ENCODE measurements at regions of chr4 and their contacts with region 1.

Region 1: GRCh38 chr4:89379511-89380044 is 72.0 kb upstream of the GPRIN3 start:
- DNase-seq: no peak
- ATAC-seq: no peak
- H3K4me3 ChIP-seq: no peak overlapping the region
- H3K4me3 Mint-ChIP-seq: no peak overlapping the region
- H3K27ac ChIP-seq: no peak overlapping the region
- H3K27ac Mint-ChIP-seq: no peak overlapping the region
- H3K4me1 ChIP-seq: no peaks in the 10 kb centered on the region
- H3K4me1 Mint-ChIP-seq: no peaks in the 10 kb centered on the region
- H3K27me3 ChIP-seq: no peaks in the 10 kb centered on the region
- H3K27me3 Mint-ChIP-seq: no peaks in the 10 kb centered on the region
- CTCF ChIP-seq: no peak

Region 2: DNA sequence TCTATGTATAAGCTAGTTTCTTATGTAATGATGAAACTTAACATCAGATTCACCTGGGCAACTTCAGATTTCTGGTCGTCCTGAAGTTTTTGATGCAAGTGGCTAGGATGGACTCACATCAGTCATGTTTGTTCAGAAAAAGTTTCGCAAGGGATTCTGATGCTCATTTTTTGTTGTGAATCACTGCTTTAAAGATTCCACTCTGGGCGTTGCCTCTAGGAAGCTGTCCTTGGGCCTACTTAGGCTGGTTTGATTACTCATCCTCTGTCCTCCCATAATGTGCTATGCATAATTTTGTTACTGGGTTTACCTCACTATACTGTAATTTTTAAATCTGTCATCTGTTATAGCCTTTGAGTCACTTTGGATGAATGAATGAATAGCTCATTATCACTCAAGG is 756.5 kb before region 1 on chr4:
- CTCF ChIA-PET with region 1: no interaction called
- POLR2A ChIA-PET with region 1: no interaction called
- intact Hi-C with region 1: no loop called
- DNase-seq: no peak
- ATAC-seq: no peak
- H3K4me3 ChIP-seq: no peak overlapping the region
- H3K4me3 Mint-ChIP-seq: no peak overlapping the region
- H3K27ac ChIP-seq: no peak overlapping the region
- H3K27ac Mint-ChIP-seq: no peak overlapping the region
- H3K4me1 ChIP-seq: no peaks in the 10 kb centered on the region
- H3K4me1 Mint-ChIP-seq: peaks cover 52% of the 10 kb centered on the region
- H3K27me3 ChIP-seq: no peaks in the 10 kb centered on the region
- H3K27me3 Mint-ChIP-seq: no peaks in the 10 kb centered on the region
- CTCF ChIP-seq: no peak

Region 3: GRCh38 chr4:89331686-89332544 is 47.7 kb before region 1 on chr4:
- CTCF ChIA-PET with region 1: no interaction called
- POLR2A ChIA-PET with region 1: no interaction called
- intact Hi-C with region 1: no loop called
- DNase-seq: no peak
- ATAC-seq: no peak
- H3K4me3 ChIP-seq: no peak overlapping the region
- H3K4me3 Mint-ChIP-seq: no peak overlapping the region
- H3K27ac ChIP-seq: no peak overlapping the region
- H3K27ac Mint-ChIP-seq: no peak overlapping the region
- H3K4me1 ChIP-seq: peaks cover 3% of the 10 kb centered on the region
- H3K4me1 Mint-ChIP-seq: peaks cover 2% of the 10 kb centered on the region
- H3K27me3 ChIP-seq: no peaks in the 10 kb centered on the region
- H3K27me3 Mint-ChIP-seq: no peaks in the 10 kb centered on the region
- CTCF ChIP-seq: no peak

Region 4: GRCh38 chr4:89344571-89344970 is 35.0 kb before region 1 on chr4:
- CTCF ChIA-PET with region 1: no interaction called
- POLR2A ChIA-PET with region 1: no interaction called
- intact Hi-C with region 1: loop called in 1 of 2 experiments (anchors 5 kb)
- DNase-seq: no peak
- ATAC-seq: no peak
- H3K4me3 ChIP-seq: no peak overlapping the region
- H3K4me3 Mint-ChIP-seq: no peak overlapping the region
- H3K27ac ChIP-seq: no peak overlapping the region
- H3K27ac Mint-ChIP-seq: no peak overlapping the region
- H3K4me1 ChIP-seq: no peaks in the 10 kb centered on the region
- H3K4me1 Mint-ChIP-seq: no peaks in the 10 kb centered on the region
- H3K27me3 ChIP-seq: no peaks in the 10 kb centered on the region
- H3K27me3 Mint-ChIP-seq: no peaks in the 10 kb centered on the region
- CTCF ChIP-seq: no peak

Region 5: GRCh38 chr4:89397464-89397863 is 17.9 kb after region 1 on chr4:
- CTCF ChIA-PET with region 1: no interaction called
- POLR2A ChIA-PET with region 1: no interaction called
- intact Hi-C with region 1: loop called in 1 of 2 experiments (anchors 1 kb)
- DNase-seq: no peak
- ATAC-seq: no peak
- H3K4me3 ChIP-seq: no peak overlapping the region
- H3K4me3 Mint-ChIP-seq: no peak overlapping the region
- H3K27ac ChIP-seq: no peak overlapping the region
- H3K27ac Mint-ChIP-seq: no peak overlapping the region
- H3K4me1 ChIP-seq: no peaks in the 10 kb centered on the region
- H3K4me1 Mint-ChIP-seq: no peaks in the 10 kb centered on the region
- H3K27me3 ChIP-seq: no peaks in the 10 kb centered on the region
- H3K27me3 Mint-ChIP-seq: no peaks in the 10 kb centered on the region
- CTCF ChIP-seq: no peak

Region 6: DNA sequence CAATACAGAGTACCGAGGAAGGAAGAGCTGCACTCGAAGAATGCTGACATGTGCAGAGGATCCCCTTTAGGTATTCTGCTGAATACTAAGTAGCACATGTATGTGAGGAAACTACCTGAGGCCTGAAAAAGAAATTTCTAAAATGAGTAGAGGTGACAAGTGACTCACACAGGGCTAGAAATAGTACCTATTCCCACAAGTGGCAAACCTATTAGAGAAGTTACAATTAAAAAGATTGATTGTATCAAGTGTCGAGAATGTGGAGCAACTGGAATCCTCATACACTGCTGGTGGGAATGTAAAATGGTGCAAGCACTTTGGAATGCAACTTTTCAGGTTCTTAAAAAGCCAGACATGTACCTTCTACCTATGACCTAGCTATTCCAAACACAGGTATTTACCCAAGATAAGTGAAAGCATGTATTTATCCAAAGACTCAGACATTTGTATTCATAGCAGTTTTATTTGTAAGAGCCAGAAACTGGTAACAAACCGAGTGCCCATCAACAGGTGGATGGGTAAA is 795.1 kb after region 1 on chr4:
- CTCF ChIA-PET with region 1: no interaction called
- POLR2A ChIA-PET with region 1: no interaction called
- intact Hi-C with region 1: no loop called
- DNase-seq: no peak
- ATAC-seq: no peak
- H3K4me3 ChIP-seq: no peak overlapping the region
- H3K4me3 Mint-ChIP-seq: no peak overlapping the region
- H3K27ac ChIP-seq: no peak overlapping the region
- H3K27ac Mint-ChIP-seq: no peak overlapping the region
- H3K4me1 ChIP-seq: no peaks in the 10 kb centered on the region
- H3K4me1 Mint-ChIP-seq: no peaks in the 10 kb centered on the region
- H3K27me3 ChIP-seq: no peaks in the 10 kb centered on the region
- H3K27me3 Mint-ChIP-seq: peaks cover 2% of the 10 kb centered on the region
- CTCF ChIP-seq: no peak

Measured in CD8-positive, alpha-beta T cell (primary cell).